Activated B cell treated with CpG ODN at 0.5 μM for 24 hours (primary cell): ENCODE measurements at regions of chr7 and their contacts with region 1.

Region 1: DNA sequence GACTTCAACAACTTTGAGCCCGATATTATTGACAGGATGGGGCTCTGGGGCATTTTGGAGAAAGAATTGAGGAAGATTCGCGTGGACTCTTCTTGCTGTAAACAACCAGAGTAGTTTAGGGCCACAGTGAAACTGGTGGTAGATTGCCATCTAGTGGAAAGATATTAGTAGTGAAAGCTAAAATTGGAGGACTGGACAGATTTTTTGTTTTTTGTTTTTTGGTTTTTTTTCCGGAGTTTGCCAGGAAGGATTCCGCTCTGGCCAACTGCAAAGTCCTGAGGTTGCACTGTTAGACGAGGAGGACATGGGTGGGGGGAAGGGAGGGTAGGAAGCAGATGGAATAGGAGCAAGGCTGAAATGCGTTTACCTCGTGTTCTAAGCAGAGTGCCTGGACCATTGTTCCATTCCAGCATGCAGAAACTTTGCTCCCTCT is 11.7 kb downstream of the NOBOX start:
- DNase-seq: no peak
- ATAC-seq: peak; percentile 67
- H3K4me3 Mint-ChIP-seq: peak overlapping the region; percentile 30
- H3K27ac Mint-ChIP-seq: no peak overlapping the region
- H3K4me1 Mint-ChIP-seq: peaks cover 4% of the 10 kb centered on the region
- H3K27me3 Mint-ChIP-seq: no peaks in the 10 kb centered on the region
- CTCF ChIP-seq: peak; percentile 82

Region 2: DNA sequence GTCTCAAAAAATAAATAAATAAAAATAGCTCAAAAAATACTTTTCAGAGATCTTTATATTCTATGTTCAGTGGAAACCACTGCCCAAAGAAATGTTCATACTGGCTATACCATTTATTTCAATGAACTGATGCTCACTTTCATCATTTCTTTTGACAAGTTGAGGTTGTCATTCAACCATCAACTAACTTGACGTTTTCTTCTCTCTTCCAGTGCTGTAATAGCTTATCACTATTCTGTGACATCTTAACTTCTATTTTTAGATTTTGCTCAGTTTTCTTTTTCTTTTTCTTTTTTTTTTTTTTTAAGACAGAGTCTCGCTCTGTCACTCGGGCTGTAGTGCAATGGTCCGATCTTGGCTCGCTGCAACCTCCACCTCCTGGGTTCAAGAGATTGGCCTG is 217.2 kb before region 1 on chr7:
- CTCF ChIA-PET with region 1: interaction called, 11 read pairs
- POLR2A ChIA-PET with region 1: no interaction called
- intact Hi-C with region 1: no loop called
- DNase-seq: no peak
- ATAC-seq: no peak
- H3K4me3 Mint-ChIP-seq: no peak overlapping the region
- H3K27ac Mint-ChIP-seq: no peak overlapping the region
- H3K4me1 Mint-ChIP-seq: peaks cover 3% of the 10 kb centered on the region
- H3K27me3 Mint-ChIP-seq: peaks cover 7% of the 10 kb centered on the region
- CTCF ChIP-seq: no peak

Region 3: GRCh38 chr7:144437370-144438191 is 45.7 kb after region 1 on chr7:
- CTCF ChIA-PET with region 1: interaction called, 4 read pairs
- POLR2A ChIA-PET with region 1: no interaction called
- intact Hi-C with region 1: loop called (anchors 1 kb)
- DNase-seq: no peak
- ATAC-seq: peak; percentile 25
- H3K4me3 Mint-ChIP-seq: no peak overlapping the region
- H3K27ac Mint-ChIP-seq: no peak overlapping the region
- H3K4me1 Mint-ChIP-seq: no peaks in the 10 kb centered on the region
- H3K27me3 Mint-ChIP-seq: no peaks in the 10 kb centered on the region
- CTCF ChIP-seq: no peak